ENCODE measurements at regions of chr15 and their contacts with region 1.

Region 1: DNA sequence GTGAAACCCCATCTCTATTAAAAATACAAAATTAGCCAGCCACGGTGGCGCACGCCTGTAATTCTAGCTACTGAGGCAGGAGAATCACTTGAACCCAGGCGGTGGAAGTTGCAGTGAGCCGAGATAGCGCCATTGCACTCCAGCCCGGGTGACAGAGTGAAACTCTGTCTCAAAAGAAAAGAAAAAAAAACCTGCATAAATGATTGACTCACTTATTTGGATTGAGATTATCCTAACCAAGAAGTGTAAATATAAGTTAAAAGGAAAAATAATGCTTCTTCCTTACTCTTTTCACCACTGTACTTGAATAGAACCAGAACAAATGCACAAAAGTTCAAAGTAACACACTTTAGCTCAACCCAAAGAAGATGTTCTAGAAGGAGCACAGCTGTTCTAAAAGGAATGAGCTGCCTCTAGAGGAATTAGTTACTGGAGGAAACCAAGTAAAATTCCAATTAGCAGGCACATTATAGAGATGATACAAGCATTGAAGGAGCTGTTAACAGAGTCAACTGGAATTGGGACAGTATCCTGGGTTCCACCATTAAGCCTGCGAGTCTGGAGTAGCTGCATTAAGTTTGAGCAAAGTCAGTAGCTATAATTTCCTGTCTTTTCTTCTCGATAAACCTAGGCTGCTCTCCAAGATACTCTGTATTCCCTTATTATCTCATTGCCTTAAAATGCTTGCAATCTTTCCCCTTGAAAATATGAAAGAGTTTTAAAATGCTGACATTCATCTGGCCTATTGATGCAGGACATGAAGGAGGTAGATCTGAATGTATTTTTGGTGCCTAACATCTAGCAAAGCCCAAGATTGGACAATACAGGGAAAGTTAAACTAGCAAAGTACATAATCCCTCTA is 9.5 kb downstream of the MTHFS start:
- DNase-seq: no peak
- ATAC-seq: no peak
- H3K4me3 ChIP-seq: no peak overlapping the region
- H3K27ac ChIP-seq: no peak overlapping the region
- H3K4me1 ChIP-seq: peaks cover 0 to 10% of the 10 kb centered on the region in 2 experiments; a peak in 2 of 5 replicates
- H3K27me3 ChIP-seq: no peaks in the 10 kb centered on the region
- CTCF ChIP-seq: no peak
- EP300 ChIP-seq: no peak
- POLR2A ChIP-seq: no peak
- RAD21 ChIP-seq: no peak

Region 2: GRCh38 chr15:79724312-79724711 is 163.0 kb before region 1 on chr15:
- CTCF ChIA-PET with region 1: no interaction called
- POLR2A ChIA-PET with region 1: no interaction called
- in situ Hi-C with region 1: no loop called
- intact Hi-C with region 1: no loop called
- DNase-seq: no peak
- ATAC-seq: no peak
- H3K4me3 ChIP-seq: no peak overlapping the region
- H3K27ac ChIP-seq: no peak overlapping the region
- H3K4me1 ChIP-seq: no peaks in the 10 kb centered on the region
- H3K27me3 ChIP-seq: no peaks in the 10 kb centered on the region
- CTCF ChIP-seq: no peak
- EP300 ChIP-seq: no peak
- POLR2A ChIP-seq: no peak
- RAD21 ChIP-seq: no peak

Region 3: GRCh38 chr15:79874245-79874644 is 13.0 kb before region 1 on chr15:
- CTCF ChIA-PET with region 1: no interaction called
- POLR2A ChIA-PET with region 1: interaction called, 24 read pairs
- in situ Hi-C with region 1: no loop called
- intact Hi-C with region 1: no loop called
- DNase-seq: no peak
- ATAC-seq: no peak
- H3K4me3 ChIP-seq: no peak overlapping the region
- H3K27ac ChIP-seq: no peak overlapping the region
- H3K4me1 ChIP-seq: no peaks in the 10 kb centered on the region
- H3K27me3 ChIP-seq: no peaks in the 10 kb centered on the region
- CTCF ChIP-seq: no peak
- EP300 ChIP-seq: no peak
- POLR2A ChIP-seq: no peak
- RAD21 ChIP-seq: no peak